Naive thymus-derived CD4-positive, alpha-beta T cell (primary cell): ENCODE measurements at regions of chr3 and their contacts with region 1.

Region 1: DNA sequence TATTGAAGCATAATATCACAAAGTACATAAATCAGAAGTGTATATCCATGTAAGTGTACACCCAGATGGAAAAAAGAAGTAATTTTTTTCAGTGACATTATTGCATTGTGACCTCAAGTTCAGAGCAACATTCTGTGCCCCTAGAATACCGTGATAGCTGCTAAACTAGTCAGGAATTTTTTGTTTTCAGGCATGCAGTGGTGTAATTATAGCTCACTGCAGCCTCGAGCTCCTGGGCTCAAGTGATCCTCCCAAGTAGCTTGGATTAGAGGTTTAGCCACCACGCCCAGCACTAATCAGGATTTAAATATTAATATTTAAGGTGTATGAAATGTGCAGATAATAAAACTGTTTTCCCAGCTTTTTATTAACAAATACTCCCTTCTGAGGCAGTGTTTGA is 25.6 kb downstream of the SEC62 start:
- DNase-seq: no peak
- ATAC-seq: no peak
- H3K4me3 ChIP-seq: no peak overlapping the region
- H3K4me3 Mint-ChIP-seq: no peak overlapping the region
- H3K27ac ChIP-seq: no peak overlapping the region
- H3K27ac Mint-ChIP-seq: peak overlapping the region in 2 of 9 donors; percentile 13 to 61
- H3K4me1 ChIP-seq: no peaks in the 10 kb centered on the region
- H3K4me1 Mint-ChIP-seq: peaks cover 0 to 13% (median 2%) of the 10 kb centered on the region in 7 donors
- H3K27me3 ChIP-seq: no peaks in the 10 kb centered on the region
- H3K27me3 Mint-ChIP-seq: no peaks in the 10 kb centered on the region

Region 2: DNA sequence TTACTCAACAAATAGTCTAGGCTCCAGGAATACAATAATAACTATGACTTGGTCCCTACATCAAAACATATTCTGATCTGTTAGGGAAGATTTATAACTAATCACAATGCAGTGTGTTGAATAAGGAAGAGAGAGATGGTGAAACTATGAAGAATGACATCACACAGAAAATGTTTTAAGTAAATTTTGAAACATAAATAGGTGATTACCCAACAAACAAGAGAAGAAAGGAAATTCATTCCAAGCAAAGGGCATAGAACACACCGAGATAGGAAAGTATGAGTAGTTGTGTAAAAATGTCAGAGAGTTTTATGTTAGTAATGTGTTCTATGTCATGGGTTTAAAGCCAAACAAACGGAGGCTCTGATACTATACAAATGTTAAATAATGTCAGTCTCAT is 12.1 kb before region 1 on chr3:
- CTCF ChIA-PET with region 1: no interaction called
- POLR2A ChIA-PET with region 1: interaction called, 3 read pairs
- intact Hi-C with region 1: loop called in 1 of 2 experiments (anchors 1 kb)
- DNase-seq: no peak
- ATAC-seq: no peak
- H3K4me3 ChIP-seq: no peak overlapping the region
- H3K4me3 Mint-ChIP-seq: no peak overlapping the region
- H3K27ac ChIP-seq: no peak overlapping the region
- H3K27ac Mint-ChIP-seq: peak overlapping the region in 6 of 9 donors; percentile 1 to 51 (median 10)
- H3K4me1 ChIP-seq: peaks cover 0 to 4% of the 10 kb centered on the region in 2 donors
- H3K4me1 Mint-ChIP-seq: peaks cover 4 to 26% (median 17%) of the 10 kb centered on the region in 7 donors
- H3K27me3 ChIP-seq: no peaks in the 10 kb centered on the region
- H3K27me3 Mint-ChIP-seq: no peaks in the 10 kb centered on the region

Region 3: GRCh38 chr3:170055209-170055608 is 63.0 kb after region 1 on chr3:
- CTCF ChIA-PET with region 1: no interaction called
- POLR2A ChIA-PET with region 1: no interaction called
- intact Hi-C with region 1: no loop called
- DNase-seq: no peak
- ATAC-seq: no peak
- H3K4me3 ChIP-seq: no peak overlapping the region
- H3K4me3 Mint-ChIP-seq: no peak overlapping the region
- H3K27ac ChIP-seq: no peak overlapping the region
- H3K27ac Mint-ChIP-seq: peak overlapping the region in 2 of 9 donors; percentile 29 to 42
- H3K4me1 ChIP-seq: peaks cover 0 to 7% of the 10 kb centered on the region in 2 donors
- H3K4me1 Mint-ChIP-seq: peaks cover 6 to 37% (median 23%) of the 10 kb centered on the region in 7 donors
- H3K27me3 ChIP-seq: no peaks in the 10 kb centered on the region
- H3K27me3 Mint-ChIP-seq: no peaks in the 10 kb centered on the region